ENCODE measurements at regions of chr1 and their contacts with region 1.

Region 1: DNA sequence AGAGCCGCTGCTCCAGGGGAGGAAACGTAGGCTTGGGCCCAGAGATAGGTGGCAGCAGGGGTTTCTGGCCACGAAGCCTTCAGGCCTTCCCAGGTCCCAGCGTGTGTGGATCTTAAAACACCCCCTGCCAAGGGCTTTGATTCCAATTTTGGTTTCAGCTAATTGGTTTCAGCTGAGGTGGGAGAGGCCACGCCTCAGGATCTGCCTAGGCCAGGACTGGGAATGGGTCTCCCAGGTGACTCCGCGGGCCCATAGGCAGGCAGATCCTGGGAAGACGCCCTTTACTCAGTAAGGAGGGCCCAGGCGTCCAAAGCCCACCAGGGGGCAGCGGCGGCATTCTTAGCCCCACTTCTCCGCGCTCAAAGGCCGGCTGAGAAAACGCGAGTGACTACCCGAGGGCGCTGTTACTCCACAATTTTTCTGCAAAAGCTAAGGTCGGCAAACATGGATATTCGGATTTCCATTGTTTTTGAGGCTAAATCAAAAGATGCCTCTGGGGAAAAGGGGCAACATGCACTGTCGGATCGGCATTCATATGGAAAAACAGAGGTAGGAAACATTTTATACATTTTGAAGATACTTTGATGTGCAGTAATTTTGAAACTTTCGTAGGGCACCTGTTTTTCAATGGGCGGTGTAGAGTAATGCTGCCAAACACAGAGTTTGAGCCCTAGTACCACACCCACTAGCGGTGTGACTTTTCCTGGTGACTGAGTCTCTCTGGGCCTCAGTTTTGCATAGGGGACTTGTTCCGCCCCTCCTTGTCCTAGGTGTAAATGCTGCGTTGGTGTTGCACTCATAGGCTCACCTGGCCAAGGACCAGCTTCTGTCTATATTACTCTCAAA is 31.8 kb upstream of the BCL10 start:
- DNase-seq: peak; percentile 38 to 94
- H3K4me3 ChIP-seq: no peak overlapping the region
- H3K27ac ChIP-seq: no peak overlapping the region
- H3K4me1 ChIP-seq: peaks cover 0 to 6% of the 10 kb centered on the region in 2 donors
- H3K27me3 ChIP-seq: no peaks in the 10 kb centered on the region
- CTCF ChIP-seq: peak; percentile 98 to 100 (median 98)

Region 2: GRCh38 chr1:85091671-85092280 is 216.4 kb before region 1 on chr1:
- intact Hi-C with region 1: no loop called
- DNase-seq: no peak
- H3K4me3 ChIP-seq: peak overlapping the region in 1 of 2 donors; percentile 40
- H3K27ac ChIP-seq: no peak overlapping the region
- H3K4me1 ChIP-seq: no peaks in the 10 kb centered on the region
- H3K27me3 ChIP-seq: no peaks in the 10 kb centered on the region
- CTCF ChIP-seq: no peak

Region 3: GRCh38 chr1:85259118-85259911 is 48.9 kb before region 1 on chr1 and contains the start of gene C1orf52:
- intact Hi-C with region 1: no loop called
- DNase-seq: peak; percentile 83 to 98
- H3K4me3 ChIP-seq: peak within 1 kb of the TSS; percentile 70 to 99
- H3K27ac ChIP-seq: peak within 1 kb of the TSS; percentile 86 to 89
- H3K4me1 ChIP-seq: peaks cover 7 to 29% of the 10 kb centered on the region in 2 donors
- H3K27me3 ChIP-seq: no peaks in the 10 kb centered on the region
- CTCF ChIP-seq: peak; percentile 97 to 99 (median 98)
- total RNA-seq, gene C1orf52: 2.3 TPM

Region 4: GRCh38 chr1:85328713-85329376 is 20.6 kb after region 1 on chr1:
- intact Hi-C with region 1: no loop called
- DNase-seq: peak in 1 of 2 donors; percentile 80
- H3K4me3 ChIP-seq: no peak overlapping the region
- H3K27ac ChIP-seq: peak overlapping the region; percentile 75 to 84
- H3K4me1 ChIP-seq: peaks cover 11 to 33% of the 10 kb centered on the region in 2 donors
- H3K27me3 ChIP-seq: no peaks in the 10 kb centered on the region
- CTCF ChIP-seq: no peak

Region 5: GRCh38 chr1:85398391-85399064 is 90.3 kb after region 1 on chr1:
- intact Hi-C with region 1: loop called (anchors 2 kb)
- DNase-seq: no peak
- H3K4me3 ChIP-seq: no peak overlapping the region
- H3K27ac ChIP-seq: no peak overlapping the region
- H3K4me1 ChIP-seq: peaks cover 2 to 24% of the 10 kb centered on the region in 2 donors
- H3K27me3 ChIP-seq: no peaks in the 10 kb centered on the region
- CTCF ChIP-seq: peak in 2 of 3 experiments; percentile 9 to 22

Region 6: DNA sequence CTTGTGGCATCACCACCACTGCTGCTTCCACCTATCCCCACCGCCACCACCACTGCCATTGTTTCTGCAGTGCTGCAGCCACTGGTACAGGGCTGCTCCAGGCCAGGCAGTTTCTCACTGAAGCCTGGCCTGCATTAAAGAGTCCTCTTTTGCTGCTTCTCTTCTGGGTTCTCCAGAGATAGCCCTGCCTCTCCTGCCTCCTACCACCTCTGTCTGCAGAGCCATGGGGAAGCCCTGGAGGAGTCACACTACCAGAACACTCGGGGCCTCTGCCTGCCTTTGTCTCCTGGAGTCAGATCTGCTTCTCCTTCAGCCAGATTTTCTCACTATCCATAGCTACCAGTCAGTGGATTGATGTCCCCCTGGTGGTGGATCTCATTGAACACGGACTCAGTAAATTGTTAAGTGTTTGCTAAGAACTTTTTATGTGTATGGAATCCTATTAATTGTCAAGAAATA is 194.4 kb after region 1 on chr1:
- intact Hi-C with region 1: loop called (anchors 5 kb)
- DNase-seq: peak in 1 of 2 donors; percentile 64
- H3K4me3 ChIP-seq: no peak overlapping the region
- H3K27ac ChIP-seq: no peak overlapping the region
- H3K4me1 ChIP-seq: no peaks in the 10 kb centered on the region
- H3K27me3 ChIP-seq: no peaks in the 10 kb centered on the region
- CTCF ChIP-seq: peak; percentile 10 to 46 (median 22)

Region 7: DNA sequence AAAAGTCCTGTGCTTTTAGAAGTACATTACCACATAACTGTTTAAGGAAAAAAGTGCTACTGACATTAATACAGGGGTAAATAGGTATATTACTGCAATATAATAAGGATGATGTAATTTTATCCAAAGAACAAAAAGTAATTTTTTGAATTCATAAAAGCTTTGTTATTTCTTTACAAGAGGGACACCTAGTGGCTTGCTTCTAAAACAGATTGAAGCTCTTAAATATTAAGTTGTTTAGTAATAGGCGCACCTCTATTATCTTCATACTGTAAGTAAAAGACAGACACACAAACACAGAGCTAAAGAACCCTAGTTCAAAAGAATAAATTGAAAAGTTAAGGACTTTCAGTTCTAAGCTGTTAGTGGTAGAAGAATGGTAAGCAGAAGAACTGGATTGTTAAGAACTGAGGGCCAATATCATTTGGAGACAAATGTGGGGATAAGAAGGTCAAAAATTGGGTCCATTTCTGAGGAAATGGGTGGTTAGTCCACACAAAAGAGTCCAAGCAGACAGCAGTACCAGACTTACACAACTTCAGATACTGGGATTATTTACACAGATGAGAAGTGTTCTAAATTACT is 384.6 kb after region 1 on chr1:
- intact Hi-C with region 1: loop called (anchors 1 kb)
- DNase-seq: no peak
- H3K4me3 ChIP-seq: no peak overlapping the region
- H3K27ac ChIP-seq: no peak overlapping the region
- H3K4me1 ChIP-seq: peaks cover 0 to 2% of the 10 kb centered on the region in 2 donors
- H3K27me3 ChIP-seq: no peaks in the 10 kb centered on the region
- CTCF ChIP-seq: peak; percentile 29 to 64 (median 55)

Region 8: DNA sequence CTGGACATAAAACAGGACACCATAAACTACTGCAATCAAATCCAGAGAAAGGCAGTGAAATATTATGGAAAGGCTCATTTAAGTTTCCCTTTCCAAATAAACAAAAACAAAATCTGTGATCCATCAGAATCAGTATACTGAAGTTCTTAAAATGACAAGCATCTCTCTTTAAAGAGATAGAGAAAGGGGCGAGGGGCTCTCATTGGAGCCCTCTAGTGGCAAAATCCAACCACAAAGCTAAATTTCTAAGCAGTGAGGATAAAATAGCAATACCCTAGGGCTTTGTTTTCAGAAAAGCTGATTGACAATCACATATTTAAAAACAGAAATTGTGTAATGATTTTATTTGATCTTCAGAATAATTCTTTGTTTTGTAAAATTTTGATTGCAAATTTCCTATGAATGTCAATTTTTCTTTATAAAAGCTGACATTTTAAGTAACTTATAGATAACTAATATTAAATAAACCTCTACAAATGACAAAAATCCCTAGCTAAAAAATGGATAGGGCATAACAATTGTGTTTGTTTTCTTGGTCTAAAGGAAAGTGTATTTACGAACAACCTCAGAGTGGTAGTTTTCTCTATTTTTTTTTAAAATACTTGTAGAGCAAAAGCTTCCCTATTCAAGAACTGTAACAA is 710.2 kb after region 1 on chr1:
- intact Hi-C with region 1: loop called (anchors 5 kb)
- DNase-seq: no peak
- H3K4me3 ChIP-seq: no peak overlapping the region
- H3K27ac ChIP-seq: no peak overlapping the region
- H3K4me1 ChIP-seq: no peaks in the 10 kb centered on the region
- H3K27me3 ChIP-seq: no peaks in the 10 kb centered on the region
- CTCF ChIP-seq: peak; percentile 19 to 65 (median 54)

Measured in ascending aorta (tissue), 2 donors.